Breast epithelium (tissue), 4 donors: ENCODE measurements at regions of chr13 and their contacts with region 1.

Region 1: GRCh38 chr13:50456111-50456510 is 387.4 kb downstream of the DLEU7 start:
- DNase-seq: no peak
- H3K4me3 ChIP-seq: no peak overlapping the region
- H3K27ac ChIP-seq: no peak overlapping the region
- H3K4me1 ChIP-seq: no peaks in the 10 kb centered on the region
- H3K27me3 ChIP-seq: no peaks in the 10 kb centered on the region
- CTCF ChIP-seq: no peak
- POLR2A ChIP-seq: no peak

Region 2: DNA sequence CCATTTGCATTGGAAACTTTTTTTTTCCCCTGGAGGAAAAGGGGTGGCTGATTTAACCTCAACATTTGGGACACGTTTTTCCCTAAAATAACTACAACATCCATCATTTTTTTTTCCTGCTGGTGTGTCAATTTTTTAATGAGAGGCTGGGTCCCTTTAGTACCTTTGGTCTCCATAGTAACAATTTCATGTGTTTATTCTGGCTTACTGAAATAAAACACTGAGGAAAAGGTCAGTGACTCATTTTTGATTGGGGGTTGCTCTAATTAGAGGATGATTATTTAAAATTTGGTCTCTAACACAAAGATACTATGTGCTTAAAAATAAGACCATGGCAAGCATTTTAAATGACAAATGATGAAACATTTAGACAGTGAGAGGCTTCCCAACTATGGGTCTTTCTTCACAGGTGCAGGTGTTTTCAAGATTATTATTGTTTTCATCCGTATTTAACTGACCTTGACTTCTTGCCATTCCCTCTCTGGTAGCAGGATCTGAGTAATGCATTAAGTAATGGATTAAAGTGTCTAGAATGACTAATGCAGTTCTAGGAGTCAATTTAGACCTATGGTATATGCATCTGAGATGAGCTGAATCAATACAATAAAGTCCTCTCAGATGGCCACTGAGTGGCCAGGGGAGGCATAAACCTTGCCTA is 34.5 kb before region 1 on chr13:
- intact Hi-C with region 1: loop called (anchors 1 kb)
- DNase-seq: no peak
- H3K4me3 ChIP-seq: no peak overlapping the region
- H3K27ac ChIP-seq: no peak overlapping the region
- H3K4me1 ChIP-seq: no peaks in the 10 kb centered on the region
- H3K27me3 ChIP-seq: no peaks in the 10 kb centered on the region
- CTCF ChIP-seq: no peak
- POLR2A ChIP-seq: no peak

Region 3: GRCh38 chr13:51125498-51126226 is 669.6 kb after region 1 on chr13:
- intact Hi-C with region 1: no loop called
- DNase-seq: no peak
- H3K4me3 ChIP-seq: no peak overlapping the region
- H3K27ac ChIP-seq: no peak overlapping the region
- H3K4me1 ChIP-seq: no peaks in the 10 kb centered on the region
- H3K27me3 ChIP-seq: no peaks in the 10 kb centered on the region
- CTCF ChIP-seq: peak; percentile 48 to 64 (median 49)
- POLR2A ChIP-seq: no peak

Region 4: DNA sequence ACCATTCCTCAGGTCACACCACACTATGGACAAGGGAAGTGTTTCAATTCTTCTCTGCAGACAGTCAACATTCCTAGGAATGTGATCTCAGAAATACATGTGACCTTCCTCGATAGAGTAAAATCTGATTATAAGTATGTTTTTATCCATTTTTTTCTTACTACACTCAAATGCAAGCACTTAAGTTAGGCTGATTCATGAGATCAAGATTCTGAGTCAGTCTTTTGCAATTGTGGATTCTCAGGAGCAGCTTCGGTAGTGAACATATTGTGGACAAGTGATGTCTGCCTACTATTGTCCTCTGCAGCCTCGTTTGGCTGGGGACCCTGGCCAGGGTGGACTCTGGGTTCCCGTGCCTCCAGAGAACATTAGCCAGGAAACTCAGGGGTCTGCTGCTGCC is 886.6 kb after region 1 on chr13:
- intact Hi-C with region 1: no loop called
- DNase-seq: no peak
- H3K4me3 ChIP-seq: no peak overlapping the region
- H3K27ac ChIP-seq: no peak overlapping the region
- H3K4me1 ChIP-seq: no peaks in the 10 kb centered on the region
- H3K27me3 ChIP-seq: no peaks in the 10 kb centered on the region
- CTCF ChIP-seq: no peak
- POLR2A ChIP-seq: no peak